ENCODE measurements at regions of chr14 and their contacts with region 1.

Region 1: GRCh38 chr14:50272503-50272902 is 39.5 kb downstream of the L2HGDH start:
- DNase-seq: no peak
- H3K4me3 Mint-ChIP-seq: no peak overlapping the region
- H3K27ac Mint-ChIP-seq: no peak overlapping the region
- H3K4me1 Mint-ChIP-seq: no peaks in the 10 kb centered on the region
- H3K27me3 Mint-ChIP-seq: no peaks in the 10 kb centered on the region

Region 2: DNA sequence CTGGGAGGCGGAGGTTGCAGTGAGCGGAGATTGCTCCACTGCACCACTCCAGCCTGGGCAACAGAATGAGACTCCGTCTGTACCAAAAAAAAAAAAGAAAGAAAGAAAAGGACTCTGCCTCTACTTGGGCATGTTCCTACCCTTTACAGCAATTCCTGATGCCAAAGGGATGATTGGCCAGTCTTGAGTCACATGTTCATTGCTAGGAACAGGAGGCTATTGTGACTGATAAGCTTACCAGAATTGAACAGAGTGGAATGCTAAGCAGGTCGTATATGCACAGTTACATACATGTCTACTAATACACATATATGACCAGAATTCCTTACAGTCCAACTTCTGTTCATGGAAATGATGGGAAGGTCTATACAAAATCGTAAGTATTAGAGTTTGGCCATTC is 545.3 kb before region 1 on chr14:
- intact Hi-C with region 1: no loop called
- DNase-seq: no peak
- H3K4me3 Mint-ChIP-seq: no peak overlapping the region
- H3K27ac Mint-ChIP-seq: no peak overlapping the region
- H3K4me1 Mint-ChIP-seq: no peaks in the 10 kb centered on the region
- H3K27me3 Mint-ChIP-seq: no peaks in the 10 kb centered on the region

Region 3: GRCh38 chr14:50018201-50018932 is 254.1 kb before region 1 on chr14:
- intact Hi-C with region 1: no loop called
- DNase-seq: no peak
- H3K4me3 Mint-ChIP-seq: no peak overlapping the region
- H3K27ac Mint-ChIP-seq: no peak overlapping the region
- H3K4me1 Mint-ChIP-seq: peaks cover 31% of the 10 kb centered on the region
- H3K27me3 Mint-ChIP-seq: no peaks in the 10 kb centered on the region

Region 4: DNA sequence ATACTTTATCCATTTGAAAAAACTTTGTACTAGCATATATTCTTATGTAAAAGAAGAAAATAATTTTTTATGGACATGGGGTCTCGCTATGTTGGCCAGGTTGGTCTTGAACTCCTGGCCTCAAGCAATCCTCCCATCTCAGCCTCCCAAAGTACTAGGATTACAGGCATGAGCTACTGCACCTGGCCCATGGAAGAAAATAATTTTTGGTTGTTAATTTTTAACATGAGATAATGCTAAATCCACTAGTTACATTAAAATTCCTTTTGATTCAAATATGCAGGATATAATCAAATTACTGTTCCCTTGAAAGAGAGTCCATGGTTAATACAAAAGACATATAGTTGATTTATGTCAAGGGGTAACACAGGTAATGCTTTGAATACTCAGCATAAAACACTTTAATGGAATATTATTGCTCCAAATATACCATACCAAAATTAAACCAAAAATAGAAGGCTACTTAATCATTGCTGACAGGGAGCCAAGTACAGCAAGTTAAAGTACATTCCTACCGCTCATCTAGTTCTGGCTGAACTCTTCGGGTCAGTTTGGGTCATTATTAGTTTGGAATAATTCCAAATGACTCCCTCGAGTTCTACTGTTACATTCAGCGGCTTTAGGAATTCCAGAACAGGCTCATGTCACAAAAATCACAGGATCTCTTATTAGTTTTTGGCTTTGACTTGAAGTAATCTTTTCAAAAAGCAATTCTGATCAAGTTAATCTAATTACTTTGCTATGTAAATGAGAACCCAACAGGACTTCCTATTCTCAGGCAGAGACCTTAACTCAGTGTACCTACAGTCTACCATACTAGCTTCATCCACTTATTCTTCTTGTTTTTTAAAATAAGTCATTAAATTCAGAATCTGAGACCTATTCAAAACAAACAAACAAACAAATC is 47.2 kb before region 1 on chr14:
- intact Hi-C with region 1: loop called (anchors 2 kb)
- DNase-seq: no peak
- H3K4me3 Mint-ChIP-seq: no peak overlapping the region
- H3K27ac Mint-ChIP-seq: no peak overlapping the region
- H3K4me1 Mint-ChIP-seq: peaks cover 36% of the 10 kb centered on the region
- H3K27me3 Mint-ChIP-seq: peaks cover 3% of the 10 kb centered on the region

Region 5: DNA sequence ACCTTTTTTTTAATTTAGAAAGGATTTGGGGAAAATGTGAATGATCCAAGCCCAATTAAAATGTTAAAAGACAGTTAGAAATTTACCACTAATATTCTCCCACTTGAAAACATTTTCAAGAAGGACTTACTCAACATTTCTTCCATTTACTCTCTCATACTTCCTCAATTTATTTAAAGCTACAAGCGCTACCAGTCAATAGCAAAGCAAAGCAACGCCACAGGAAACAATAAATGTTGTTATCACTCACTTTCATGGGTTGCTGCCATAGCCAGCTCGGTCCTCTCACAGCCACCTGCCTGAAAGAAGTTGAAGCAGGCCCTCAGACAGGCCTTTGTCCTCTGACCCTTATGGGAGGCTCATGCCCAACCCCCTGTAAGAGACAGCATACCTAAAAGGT is 35.1 kb before region 1 on chr14:
- intact Hi-C with region 1: no loop called
- DNase-seq: no peak
- H3K4me3 Mint-ChIP-seq: no peak overlapping the region
- H3K27ac Mint-ChIP-seq: no peak overlapping the region
- H3K4me1 Mint-ChIP-seq: peaks cover 15% of the 10 kb centered on the region
- H3K27me3 Mint-ChIP-seq: peaks cover 2% of the 10 kb centered on the region